ENCODE measurements at regions of chr2 and their contacts with region 1.

Region 1: GRCh38 chr2:57906152-57906732 is 140.4 kb upstream of the VRK2 start:
- DNase-seq: no peak
- H3K4me3 Mint-ChIP-seq: no peak overlapping the region
- H3K27ac Mint-ChIP-seq: no peak overlapping the region
- H3K4me1 Mint-ChIP-seq: no peaks in the 10 kb centered on the region
- H3K27me3 Mint-ChIP-seq: no peaks in the 10 kb centered on the region
- CTCF ChIP-seq: peak; percentile 42

Region 2: GRCh38 chr2:58131191-58132011 is 225.2 kb after region 1 on chr2:
- CTCF ChIA-PET with region 1: no interaction called
- intact Hi-C with region 1: loop called (anchors 5 kb)
- DNase-seq: no peak
- H3K4me3 Mint-ChIP-seq: no peak overlapping the region
- H3K27ac Mint-ChIP-seq: no peak overlapping the region
- H3K4me1 Mint-ChIP-seq: no peaks in the 10 kb centered on the region
- H3K27me3 Mint-ChIP-seq: no peaks in the 10 kb centered on the region
- CTCF ChIP-seq: no peak

Region 3: GRCh38 chr2:58146707-58147106 is 240.5 kb after region 1 on chr2:
- CTCF ChIA-PET with region 1: interaction called, 4 read pairs
- intact Hi-C with region 1: loop called (anchors 5 kb)
- DNase-seq: peak; percentile 4
- H3K4me3 Mint-ChIP-seq: no peak overlapping the region
- H3K27ac Mint-ChIP-seq: peak overlapping the region; percentile 44
- H3K4me1 Mint-ChIP-seq: no peaks in the 10 kb centered on the region
- H3K27me3 Mint-ChIP-seq: no peaks in the 10 kb centered on the region
- CTCF ChIP-seq: no peak

Region 4: DNA sequence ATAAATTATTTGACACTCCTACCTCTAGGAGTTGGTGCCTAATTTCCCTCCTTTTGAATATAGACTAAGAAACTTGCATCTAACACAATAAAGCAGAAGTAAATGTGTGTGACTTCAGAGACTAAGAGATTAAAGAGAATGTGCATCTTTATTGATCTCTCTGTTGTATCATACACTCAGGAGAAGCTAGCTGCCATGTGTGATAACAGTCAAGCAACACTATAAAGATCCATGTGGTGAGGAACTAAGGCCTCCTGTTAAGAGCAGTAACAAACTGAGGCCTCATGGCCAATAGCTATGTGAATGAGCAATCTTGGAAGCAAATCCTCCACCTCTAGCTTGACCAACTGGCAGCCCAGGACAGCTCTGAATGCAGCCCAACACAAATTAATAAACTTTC is 331.5 kb after region 1 on chr2:
- CTCF ChIA-PET with region 1: no interaction called
- intact Hi-C with region 1: loop called (anchors 5 kb)
- DNase-seq: no peak
- H3K4me3 Mint-ChIP-seq: peak overlapping the region; percentile 9
- H3K27ac Mint-ChIP-seq: no peak overlapping the region
- H3K4me1 Mint-ChIP-seq: peaks cover 48% of the 10 kb centered on the region
- H3K27me3 Mint-ChIP-seq: no peaks in the 10 kb centered on the region
- CTCF ChIP-seq: no peak

Region 5: GRCh38 chr2:58419983-58420382 is 513.7 kb after region 1 on chr2:
- CTCF ChIA-PET with region 1: no interaction called
- intact Hi-C with region 1: no loop called
- DNase-seq: no peak
- H3K4me3 Mint-ChIP-seq: no peak overlapping the region
- H3K27ac Mint-ChIP-seq: no peak overlapping the region
- H3K4me1 Mint-ChIP-seq: no peaks in the 10 kb centered on the region
- H3K27me3 Mint-ChIP-seq: no peaks in the 10 kb centered on the region
- CTCF ChIP-seq: no peak